Mammary epithelial cell (primary cell): ENCODE measurements at regions of chr9 and their contacts with region 1.

Region 1: DNA sequence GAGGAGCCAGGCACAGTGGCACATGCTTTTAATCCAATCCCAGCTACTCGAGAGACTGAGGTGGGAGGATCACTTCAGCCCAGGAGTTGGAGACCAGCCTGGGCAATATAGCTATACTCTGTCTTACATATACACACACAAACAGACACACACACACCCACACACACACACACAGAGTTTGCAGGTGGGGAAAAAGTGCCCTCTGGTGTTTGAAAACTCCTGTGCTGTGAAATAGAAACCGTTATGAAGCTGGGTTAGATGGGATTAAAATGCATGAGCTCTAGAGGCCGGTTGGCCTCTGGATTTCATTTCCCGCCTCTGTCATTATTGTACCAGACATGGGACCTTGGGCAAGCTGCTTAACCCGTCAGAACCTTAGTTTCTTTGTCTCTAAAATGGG is 121.0 kb upstream of the SLC28A3 start:
- DNase-seq: no peak
- H3K4me3 ChIP-seq: no peak overlapping the region
- H3K27ac ChIP-seq: no peak overlapping the region
- H3K4me1 ChIP-seq: no peaks in the 10 kb centered on the region
- H3K27me3 ChIP-seq: no peaks in the 10 kb centered on the region
- CTCF ChIP-seq: peak in 1 of 2 donors; percentile 14

Region 2: GRCh38 chr9:84387821-84388220 is 73.7 kb before region 1 on chr9:
- CTCF ChIA-PET with region 1: no interaction called
- dilution Hi-C with region 1: no loop called
- in situ Hi-C with region 1: no loop called
- intact Hi-C with region 1: no loop called
- DNase-seq: no peak
- H3K4me3 ChIP-seq: no peak overlapping the region
- H3K27ac ChIP-seq: no peak overlapping the region
- H3K4me1 ChIP-seq: peaks cover 9% of the 10 kb centered on the region
- H3K27me3 ChIP-seq: no peaks in the 10 kb centered on the region
- CTCF ChIP-seq: no peak

Region 3: GRCh38 chr9:84404095-84404686 is 57.3 kb before region 1 on chr9:
- CTCF ChIA-PET with region 1: no interaction called
- dilution Hi-C with region 1: no loop called
- in situ Hi-C with region 1: no loop called
- intact Hi-C with region 1: loop called (anchors 1 kb)
- DNase-seq: no peak
- H3K4me3 ChIP-seq: no peak overlapping the region
- H3K27ac ChIP-seq: no peak overlapping the region
- H3K4me1 ChIP-seq: no peaks in the 10 kb centered on the region
- H3K27me3 ChIP-seq: no peaks in the 10 kb centered on the region
- CTCF ChIP-seq: peak; percentile 57 to 76

Region 4: DNA sequence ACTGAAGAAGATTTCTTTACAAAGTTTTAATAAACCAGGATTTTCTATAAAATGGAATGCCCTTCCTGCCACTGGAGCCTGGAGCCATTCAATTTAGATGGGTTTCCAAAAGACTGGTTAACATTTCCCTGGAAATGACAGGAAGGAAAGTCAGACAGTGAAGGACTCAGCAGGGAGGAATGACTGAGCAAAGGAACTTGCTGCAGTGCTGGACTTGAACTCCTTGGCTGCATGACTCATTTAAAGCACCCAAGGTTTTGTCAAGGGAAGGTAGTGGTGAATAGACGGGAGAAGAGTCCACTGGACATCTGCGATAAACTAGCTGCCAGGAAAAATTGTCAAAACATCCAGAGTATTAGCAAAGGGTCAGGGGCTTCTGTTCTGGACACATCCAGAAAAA is 42.8 kb after region 1 on chr9:
- CTCF ChIA-PET with region 1: no interaction called
- dilution Hi-C with region 1: no loop called
- in situ Hi-C with region 1: no loop called
- intact Hi-C with region 1: no loop called
- DNase-seq: peak; percentile 25
- H3K4me3 ChIP-seq: no peak overlapping the region
- H3K27ac ChIP-seq: no peak overlapping the region
- H3K4me1 ChIP-seq: no peaks in the 10 kb centered on the region
- H3K27me3 ChIP-seq: no peaks in the 10 kb centered on the region
- CTCF ChIP-seq: no peak